PC-3 (cell line): ENCODE measurements at regions of chr12 and their contacts with region 1.

Region 1: DNA sequence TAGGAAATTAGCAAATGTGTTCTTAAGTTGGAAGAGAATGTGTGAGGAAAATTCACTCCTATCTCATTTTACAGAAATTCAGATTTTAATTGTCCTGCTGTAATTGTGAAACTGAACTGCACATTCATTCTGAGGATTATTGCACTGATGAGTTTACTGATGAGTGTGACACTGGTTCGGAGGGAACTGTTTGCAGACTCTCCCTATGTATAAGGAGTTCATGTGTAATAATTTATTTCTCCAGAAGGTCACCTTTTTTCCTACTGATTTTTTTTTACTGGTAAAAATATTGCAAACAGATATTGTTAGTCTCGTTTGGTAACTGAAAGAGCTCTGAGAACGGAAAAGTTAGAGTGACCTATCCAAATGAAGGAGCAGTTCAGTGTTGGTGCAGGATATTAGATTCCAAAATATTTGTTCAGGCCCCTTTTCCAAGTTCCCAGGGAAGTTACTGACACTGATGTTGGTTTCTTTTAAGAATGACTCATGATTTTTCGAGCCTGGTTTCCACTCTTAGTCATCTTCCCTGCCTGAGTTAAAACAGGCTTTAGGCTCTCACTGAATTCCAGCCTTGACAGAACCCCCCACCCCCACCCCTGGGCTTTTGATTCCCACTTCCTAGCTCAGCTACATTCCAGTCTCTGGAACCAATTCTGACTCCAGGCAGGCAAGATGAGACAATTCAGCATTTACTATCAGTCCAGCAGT is 18.4 kb downstream of the ANO6 start:
- DNase-seq: peak; percentile 96
- ATAC-seq: peak; percentile 69
- H3K4me3 ChIP-seq: peak overlapping the region; percentile 59
- H3K27ac ChIP-seq: peak overlapping the region; percentile 90
- H3K4me1 ChIP-seq: peaks cover 54% of the 10 kb centered on the region
- H3K27me3 ChIP-seq: no peaks in the 10 kb centered on the region
- CTCF ChIP-seq: no peak

Region 2: DNA sequence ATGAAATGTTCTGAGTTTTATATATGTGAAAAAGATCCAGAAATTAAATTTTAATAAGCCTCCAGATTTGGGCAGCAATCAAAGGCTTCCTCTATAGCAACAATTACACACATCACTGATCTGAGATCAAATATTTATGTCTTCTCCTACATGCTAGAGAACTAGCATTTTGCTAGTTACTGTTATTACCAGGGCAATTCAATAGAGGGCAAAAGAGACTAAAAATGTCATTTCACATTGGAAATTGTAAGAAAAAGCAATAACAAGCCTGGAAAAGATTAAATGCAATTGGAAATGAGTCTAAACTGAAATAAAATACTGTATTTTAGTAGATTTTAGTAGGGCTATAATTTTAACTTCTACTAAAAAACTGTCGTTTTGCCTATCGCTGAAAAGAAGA is 51.0 kb before region 1 on chr12:
- CTCF ChIA-PET with region 1: no interaction called
- POLR2A ChIA-PET with region 1: no interaction called
- intact Hi-C with region 1: loop called (anchors 5 kb)
- DNase-seq: peak; percentile 32
- ATAC-seq: no peak
- H3K4me3 ChIP-seq: no peak overlapping the region
- H3K27ac ChIP-seq: no peak overlapping the region
- H3K4me1 ChIP-seq: no peaks in the 10 kb centered on the region
- H3K27me3 ChIP-seq: no peaks in the 10 kb centered on the region
- CTCF ChIP-seq: peak; percentile 65

Region 3: DNA sequence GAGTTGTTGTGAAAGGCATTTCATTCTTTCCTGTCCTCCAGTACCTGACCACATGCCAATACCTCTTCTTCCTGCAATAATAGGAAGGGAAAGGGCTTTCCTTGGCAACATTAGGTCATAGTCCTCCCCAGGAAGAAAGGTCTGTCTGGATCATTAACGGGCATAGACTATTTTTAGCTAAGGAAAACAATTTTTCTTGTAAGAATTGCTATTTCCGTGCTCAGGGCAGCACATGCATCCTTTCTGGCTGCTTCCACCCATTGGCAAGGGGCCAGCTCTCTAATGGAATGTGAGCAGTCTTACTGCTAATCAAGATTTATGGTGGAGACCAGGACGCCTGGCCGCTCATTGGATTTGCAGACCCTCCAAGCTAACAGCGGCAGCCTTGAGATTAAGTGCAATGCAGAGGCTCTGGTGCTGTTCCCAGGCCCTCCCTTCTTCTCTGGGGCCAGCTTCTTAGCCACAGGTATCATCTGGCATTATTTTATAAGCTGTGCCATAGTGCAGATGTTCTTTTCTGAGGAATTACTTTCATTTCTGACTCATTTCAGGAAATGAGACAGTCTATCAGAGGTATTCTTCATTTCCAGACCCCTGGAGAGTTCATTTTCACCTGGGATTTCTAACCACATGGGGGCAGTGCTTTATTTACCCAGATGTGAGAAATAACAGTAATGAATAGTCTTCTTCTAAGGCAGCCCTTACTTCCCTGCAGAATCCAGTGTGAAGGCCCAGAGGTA is 34.5 kb after region 1 on chr12:
- CTCF ChIA-PET with region 1: no interaction called
- POLR2A ChIA-PET with region 1: interaction called, 8 read pairs
- intact Hi-C with region 1: loop called (anchors 1 kb)
- DNase-seq: peak; percentile 95
- ATAC-seq: peak; percentile 73
- H3K4me3 ChIP-seq: peak overlapping the region; percentile 41
- H3K27ac ChIP-seq: peak overlapping the region; percentile 88
- H3K4me1 ChIP-seq: peaks cover 32% of the 10 kb centered on the region
- H3K27me3 ChIP-seq: no peaks in the 10 kb centered on the region
- CTCF ChIP-seq: peak; percentile 87

Region 4: DNA sequence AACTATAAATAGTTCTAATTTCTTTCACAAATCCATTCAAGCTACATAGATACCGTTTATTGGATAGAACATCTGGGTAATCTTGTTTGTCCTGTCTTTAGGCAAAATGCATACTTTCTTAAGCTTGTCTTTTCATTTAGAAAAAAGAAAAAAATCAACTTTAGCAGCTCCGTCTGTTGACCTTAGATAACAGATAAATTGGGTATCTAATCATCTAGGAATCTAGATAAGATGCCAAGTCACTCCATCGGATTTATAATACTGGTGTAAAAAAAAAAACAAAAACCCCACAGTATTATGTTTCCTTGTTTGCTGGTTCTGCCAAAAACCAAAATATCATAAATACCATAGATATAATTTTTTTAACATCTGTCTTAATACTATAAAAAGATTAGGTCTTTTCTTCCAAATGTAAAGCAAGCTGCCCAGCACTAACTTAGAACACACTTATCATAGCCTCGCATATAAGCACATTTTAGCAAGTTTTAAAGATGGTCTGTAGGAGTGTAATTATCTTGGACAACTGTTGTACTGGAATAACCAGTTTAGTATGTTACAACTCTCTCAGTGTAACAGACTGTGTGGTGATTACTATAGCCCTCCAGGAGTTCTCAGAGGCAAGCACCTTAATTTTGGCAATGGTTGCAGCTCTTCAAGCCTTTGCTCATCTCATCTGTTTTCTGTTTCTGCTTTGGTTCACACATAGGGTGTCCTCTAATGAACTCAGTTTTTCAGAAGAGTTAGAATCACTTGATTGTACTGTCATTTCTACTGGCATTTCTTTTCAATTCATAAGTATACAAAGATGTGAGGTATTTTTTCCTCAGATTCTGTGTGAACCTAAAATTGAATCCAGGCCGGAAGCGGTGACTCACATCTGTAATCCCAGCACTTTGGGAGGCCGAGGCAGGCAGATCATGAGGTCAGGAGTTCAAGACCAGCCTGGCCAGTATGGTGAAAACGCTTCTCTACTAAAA is 64.7 kb after region 1 on chr12:
- CTCF ChIA-PET with region 1: no interaction called
- POLR2A ChIA-PET with region 1: no interaction called
- intact Hi-C with region 1: no loop called
- DNase-seq: peak; percentile 65
- ATAC-seq: peak; percentile 55; the same call in 1 of the 2 replicates
- H3K4me3 ChIP-seq: no peak overlapping the region
- H3K27ac ChIP-seq: no peak overlapping the region
- H3K4me1 ChIP-seq: peaks cover 15% of the 10 kb centered on the region
- H3K27me3 ChIP-seq: no peaks in the 10 kb centered on the region
- CTCF ChIP-seq: no peak